H1 (cell line): ENCODE measurements at regions of chr17 and their contacts with region 1.

Region 1: GRCh38 chr17:45666046-45666600 is 118.0 kb upstream of the CRHR1 start:
- DNase-seq: no peak
- H3K4me3 ChIP-seq: no peak overlapping the region
- H3K27ac ChIP-seq: no peak overlapping the region
- H3K4me1 ChIP-seq: no peaks in the 10 kb centered on the region
- H3K27me3 ChIP-seq: no peaks in the 10 kb centered on the region; a peak in 3 of 7 replicates
- CTCF ChIP-seq: peak; percentile 54 to 65 (median 54)
- EP300 ChIP-seq: no peak
- POLR2A ChIP-seq: no peak
- RAD21 ChIP-seq: peak; percentile 78

Region 2: GRCh38 chr17:45677770-45678169 is 11.6 kb after region 1 on chr17:
- CTCF ChIA-PET with region 1: interaction called, 16 read pairs
- POLR2A ChIA-PET with region 1: no interaction called
- DNase-seq: no peak
- H3K4me3 ChIP-seq: no peak overlapping the region
- H3K27ac ChIP-seq: no peak overlapping the region
- H3K4me1 ChIP-seq: peaks cover 0 to 7% (median 2%) of the 10 kb centered on the region in 4 experiments; a peak in 2 of 7 replicates
- H3K27me3 ChIP-seq: no peaks in the 10 kb centered on the region
- CTCF ChIP-seq: no peak
- EP300 ChIP-seq: no peak
- POLR2A ChIP-seq: no peak
- RAD21 ChIP-seq: no peak

Region 3: GRCh38 chr17:45688353-45688752 is 22.2 kb after region 1 on chr17:
- CTCF ChIA-PET with region 1: interaction called, 12 read pairs
- POLR2A ChIA-PET with region 1: interaction called, 3 read pairs
- DNase-seq: no peak
- H3K4me3 ChIP-seq: no peak overlapping the region
- H3K27ac ChIP-seq: no peak overlapping the region
- H3K4me1 ChIP-seq: no peaks in the 10 kb centered on the region
- H3K27me3 ChIP-seq: peaks cover 0 to 5% (median 0%) of the 10 kb centered on the region in 4 experiments; a peak in 3 of 7 replicates
- CTCF ChIP-seq: no peak
- EP300 ChIP-seq: no peak
- POLR2A ChIP-seq: no peak
- RAD21 ChIP-seq: no peak

Region 4: DNA sequence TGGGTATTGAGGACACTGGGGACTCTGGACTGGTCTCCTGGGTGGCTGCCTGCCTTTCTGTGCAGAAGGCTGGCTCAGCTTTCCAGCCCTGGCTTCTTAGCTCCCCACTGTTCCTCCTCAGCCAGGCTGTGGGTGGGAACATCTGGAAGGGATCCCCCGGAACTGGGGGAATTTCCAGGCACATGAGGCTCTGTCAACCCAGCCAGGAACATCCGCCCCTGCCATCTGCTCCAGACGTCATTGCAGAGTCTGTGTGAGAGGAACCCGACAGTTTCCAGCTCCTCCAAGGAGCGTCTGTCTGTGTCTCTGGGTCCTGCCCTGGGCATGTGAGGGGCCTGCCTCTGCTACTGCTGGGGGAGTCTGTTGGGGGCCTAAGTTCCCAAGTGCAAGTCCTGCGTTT is 81.8 kb after region 1 on chr17:
- CTCF ChIA-PET with region 1: interaction called, 16 read pairs
- POLR2A ChIA-PET with region 1: no interaction called
- DNase-seq: no peak
- H3K4me3 ChIP-seq: no peak overlapping the region
- H3K27ac ChIP-seq: no peak overlapping the region
- H3K4me1 ChIP-seq: peaks cover 2 to 5% (median 3%) of the 10 kb centered on the region in 4 experiments; a peak in 5 of 7 replicates
- H3K27me3 ChIP-seq: peaks cover 17 to 90% (median 67%) of the 10 kb centered on the region in 4 experiments
- CTCF ChIP-seq: no peak
- EP300 ChIP-seq: no peak
- POLR2A ChIP-seq: no peak
- RAD21 ChIP-seq: no peak

Region 5: DNA sequence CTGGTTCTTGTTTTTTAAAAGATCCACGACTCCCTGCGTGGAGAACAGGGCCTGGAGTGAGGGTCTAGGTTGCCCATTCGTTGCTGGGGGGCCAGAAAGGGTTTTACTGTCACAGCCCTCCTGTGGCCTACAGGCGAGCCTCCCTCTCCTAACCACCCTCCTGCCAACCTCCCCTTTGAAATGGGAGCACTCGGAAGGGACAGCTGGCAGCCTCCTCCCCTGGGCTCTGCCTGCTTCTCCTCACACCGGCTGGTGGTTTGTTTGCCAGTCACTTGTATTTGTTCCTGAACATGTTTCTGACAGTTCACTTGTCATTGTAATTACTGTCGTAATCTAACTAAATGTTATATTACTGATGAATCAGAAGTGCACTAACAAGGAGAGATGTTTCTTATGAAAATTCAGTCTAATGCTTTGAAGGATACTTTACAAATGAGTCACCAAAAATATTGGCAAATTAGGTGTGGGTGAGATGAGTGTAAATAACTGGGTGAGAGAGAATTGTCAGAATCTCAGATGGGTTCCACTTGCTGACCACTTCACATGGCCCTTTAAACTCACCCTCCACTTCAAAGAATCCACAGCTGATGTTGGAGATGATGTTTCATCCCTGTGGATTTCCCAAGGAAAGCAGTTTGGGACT is 175.9 kb after region 1 on chr17:
- CTCF ChIA-PET with region 1: interaction called, 11 read pairs
- POLR2A ChIA-PET with region 1: no interaction called
- DNase-seq: no peak
- H3K4me3 ChIP-seq: no peak overlapping the region
- H3K27ac ChIP-seq: no peak overlapping the region
- H3K4me1 ChIP-seq: peaks cover 0 to 2% (median under 1%) of the 10 kb centered on the region in 4 experiments; a peak in 2 of 7 replicates
- H3K27me3 ChIP-seq: no peaks in the 10 kb centered on the region
- CTCF ChIP-seq: no peak
- EP300 ChIP-seq: no peak
- POLR2A ChIP-seq: no peak
- RAD21 ChIP-seq: no peak

Region 6: DNA sequence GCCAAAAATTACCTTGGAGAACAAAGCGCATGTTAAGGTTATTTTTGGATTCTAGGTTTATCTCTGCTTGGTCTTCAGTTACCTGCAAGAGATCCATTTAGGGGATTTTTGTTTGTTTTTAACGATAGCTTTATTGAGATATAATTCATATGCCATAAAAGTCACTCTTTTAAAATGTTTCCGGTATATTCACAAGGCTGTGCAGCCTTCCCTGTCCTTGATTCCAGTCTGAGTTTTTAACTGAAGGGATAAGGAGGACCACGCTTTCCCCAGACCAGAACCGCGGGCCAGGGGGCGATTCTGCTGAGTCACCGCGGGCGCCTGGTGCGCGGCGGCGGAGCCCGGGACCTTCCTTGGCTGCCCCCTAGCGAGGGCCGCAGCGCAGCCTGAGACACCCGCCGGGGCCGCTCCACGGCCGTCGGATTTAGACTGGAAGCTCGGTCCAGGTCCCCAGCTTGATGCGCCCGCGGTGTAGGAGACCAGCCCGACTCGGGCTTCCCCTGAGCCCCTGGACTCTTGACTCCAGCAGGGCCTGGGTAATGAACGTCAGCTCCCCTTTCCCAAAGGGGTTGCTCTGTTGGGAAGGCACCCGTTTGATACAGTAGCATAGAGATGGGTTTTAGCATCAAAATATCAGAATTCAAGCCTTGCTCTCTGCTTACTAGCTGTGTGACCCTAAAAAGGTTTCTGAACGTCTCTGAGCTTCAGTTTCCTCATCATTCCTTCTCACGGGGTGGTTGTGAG is 282.9 kb after region 1 on chr17:
- CTCF ChIA-PET with region 1: no interaction called
- POLR2A ChIA-PET with region 1: no interaction called
- DNase-seq: peak; percentile 39 to 84
- H3K4me3 ChIP-seq: peak overlapping the region in 2 of 4 experiments; percentile 15 to 45; a peak in 3 of 8 replicates
- H3K27ac ChIP-seq: no peak overlapping the region
- H3K4me1 ChIP-seq: peaks cover 0 to 6% (median 2%) of the 10 kb centered on the region in 4 experiments; a peak in 4 of 7 replicates
- H3K27me3 ChIP-seq: peaks cover 0 to 12% (median 11%) of the 10 kb centered on the region in 4 experiments; a peak in 6 of 7 replicates
- CTCF ChIP-seq: peak; percentile 62 to 79 (median 65)
- EP300 ChIP-seq: peak in 1 of 2 experiments; percentile 21; a peak in 1 of 3 replicates
- POLR2A ChIP-seq: no peak
- RAD21 ChIP-seq: peak; percentile 55 to 67